Uterus (tissue), 4 donors: ENCODE measurements at regions of chr10 and their contacts with region 1.

Region 1: DNA sequence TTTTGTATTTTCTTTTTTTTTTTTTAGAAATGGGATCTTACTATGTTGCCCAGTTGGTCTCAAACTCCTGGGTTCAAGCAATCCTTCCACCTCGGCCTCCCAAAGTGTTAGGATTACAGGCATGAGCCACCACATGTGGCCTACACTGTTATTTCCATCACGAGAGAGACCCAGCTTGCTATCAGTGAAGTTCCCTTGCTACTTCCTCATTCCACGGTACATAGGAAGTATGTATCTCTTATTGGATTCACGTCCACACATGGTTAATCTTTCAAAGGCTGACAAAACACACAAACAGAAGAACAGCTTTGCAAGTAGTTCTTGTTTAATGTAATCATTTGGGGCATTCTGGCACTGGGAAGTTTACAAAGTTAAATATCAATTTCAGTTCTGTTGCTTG is 50.9 kb downstream of the DCLRE1A start:
- DNase-seq: no peak
- H3K4me3 ChIP-seq: no peak overlapping the region
- H3K27ac ChIP-seq: no peak overlapping the region
- H3K4me1 ChIP-seq: no peaks in the 10 kb centered on the region
- H3K27me3 ChIP-seq: no peaks in the 10 kb centered on the region
- CTCF ChIP-seq: no peak
- POLR2A ChIP-seq: no peak

Region 2: GRCh38 chr10:114043532-114044246 is 240.7 kb after region 1 on chr10 and contains the start of gene ADRB1:
- intact Hi-C with region 1: no loop called
- DNase-seq: peak; percentile 19 to 27
- H3K4me3 ChIP-seq: no peak within 1 kb of the TSS
- H3K27ac ChIP-seq: no peak within 1 kb of the TSS
- H3K4me1 ChIP-seq: no peaks in the 10 kb centered on the region
- H3K27me3 ChIP-seq: peaks cover 4 to 8% of the 10 kb centered on the region in 2 donors
- CTCF ChIP-seq: no peak
- POLR2A ChIP-seq: peak in 1 of 2 donors; percentile 27
- total RNA-seq, gene ADRB1: 0.18 TPM in 1 of 4 donors, not detected in the others

Region 3: GRCh38 chr10:114103284-114103683 is 300.3 kb after region 1 on chr10:
- intact Hi-C with region 1: loop called (anchors 10 kb)
- DNase-seq: no peak
- H3K4me3 ChIP-seq: no peak overlapping the region
- H3K27ac ChIP-seq: no peak overlapping the region
- H3K4me1 ChIP-seq: peaks cover 0 to 4% of the 10 kb centered on the region in 2 donors
- H3K27me3 ChIP-seq: no peaks in the 10 kb centered on the region
- CTCF ChIP-seq: peak; percentile 23 to 65 (median 56)
- POLR2A ChIP-seq: no peak